ENCODE measurements at regions of chr10 and their contacts with region 1.

Region 1: GRCh38 chr10:89391917-89392756 is at the start of gene IFIT1:
- DNase-seq: peak in 8 of 9 donors; percentile 36 to 84 (median 72)
- ATAC-seq: peak; percentile 96
- H3K4me3 ChIP-seq: peak within 1 kb of the TSS; percentile 82
- H3K4me3 Mint-ChIP-seq: peak within 1 kb of the TSS; percentile 85 to 96 (median 90)
- H3K27ac ChIP-seq: peak within 1 kb of the TSS; percentile 72
- H3K27ac Mint-ChIP-seq: peak within 1 kb of the TSS; percentile 87 to 97 (median 93)
- H3K4me1 ChIP-seq: peaks cover 14 to 19% of the 10 kb centered on the region in 2 donors
- H3K4me1 Mint-ChIP-seq: peaks cover 14 to 53% (median 45%) of the 10 kb centered on the region in 7 donors
- H3K27me3 ChIP-seq: no peaks in the 10 kb centered on the region
- H3K27me3 Mint-ChIP-seq: peaks cover 0 to 6% (median 0%) of the 10 kb centered on the region in 5 donors
- total RNA-seq, gene IFIT1: 1.7 to 15.7 (median 6.5) TPM

Region 2: GRCh38 chr10:89295597-89295996 is 96.5 kb before region 1 on chr10:
- CTCF ChIA-PET with region 1: interaction called, 3 read pairs
- POLR2A ChIA-PET with region 1: interaction called, 27 read pairs
- intact Hi-C with region 1: loop called (anchors 1 kb)
- DNase-seq: no peak
- ATAC-seq: no peak
- H3K4me3 ChIP-seq: no peak overlapping the region
- H3K4me3 Mint-ChIP-seq: peak overlapping the region in 1 of 10 donors; percentile 2
- H3K27ac ChIP-seq: no peak overlapping the region
- H3K27ac Mint-ChIP-seq: peak overlapping the region in 1 of 9 donors; percentile 67
- H3K4me1 ChIP-seq: peaks cover 0 to 8% of the 10 kb centered on the region in 2 donors
- H3K4me1 Mint-ChIP-seq: peaks cover 11 to 40% (median 23%) of the 10 kb centered on the region in 7 donors
- H3K27me3 ChIP-seq: no peaks in the 10 kb centered on the region
- H3K27me3 Mint-ChIP-seq: peaks cover 0 to 25% (median 0%) of the 10 kb centered on the region in 5 donors

Region 3: DNA sequence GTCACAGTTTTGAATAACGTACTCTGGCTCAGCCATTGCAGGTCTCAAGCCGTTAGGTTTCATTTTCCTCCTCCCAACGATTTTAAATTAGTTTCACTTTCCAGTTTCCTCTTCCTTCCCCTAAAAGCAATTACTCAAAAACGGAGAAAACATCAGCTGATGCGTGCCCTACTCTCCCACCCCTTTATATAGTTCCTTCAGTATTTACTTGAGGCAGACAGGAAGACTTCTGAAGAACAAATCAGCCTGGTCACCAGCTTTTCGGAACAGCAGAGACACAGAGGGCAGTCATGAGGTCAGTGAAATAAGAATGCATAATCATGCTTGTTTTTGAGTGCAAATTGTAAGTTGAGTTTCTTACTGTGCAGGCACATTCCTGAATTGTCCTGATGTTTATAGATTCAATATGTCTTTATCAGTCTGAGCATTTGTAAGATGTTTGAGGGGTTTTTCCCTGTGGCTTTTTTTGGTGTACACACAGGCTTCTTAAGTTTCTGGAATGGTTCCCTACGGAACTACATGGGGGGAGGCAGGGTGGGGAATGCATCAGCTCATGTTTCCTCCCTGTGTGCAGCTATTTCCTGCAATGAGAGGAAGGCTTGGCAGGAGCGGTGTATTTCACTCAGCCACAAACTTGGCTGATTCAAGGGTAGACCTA is 64.2 kb before region 1 on chr10 and contains the start of gene IFIT3:
- CTCF ChIA-PET with region 1: no interaction called
- POLR2A ChIA-PET with region 1: interaction called, 11 read pairs
- intact Hi-C with region 1: loop called in 1 of 2 experiments (anchors 1 kb)
- DNase-seq: peak in 7 of 9 donors; percentile 22 to 42 (median 30)
- ATAC-seq: peak; percentile 65
- H3K4me3 ChIP-seq: peak within 1 kb of the TSS; percentile 68
- H3K4me3 Mint-ChIP-seq: peak within 1 kb of the TSS; percentile 80 to 94 (median 90)
- H3K27ac ChIP-seq: peak within 1 kb of the TSS; percentile 62
- H3K27ac Mint-ChIP-seq: peak within 1 kb of the TSS; percentile 70 to 94 (median 87)
- H3K4me1 ChIP-seq: peaks cover 14 to 25% of the 10 kb centered on the region in 2 donors
- H3K4me1 Mint-ChIP-seq: peaks cover 26 to 59% (median 54%) of the 10 kb centered on the region in 7 donors
- H3K27me3 ChIP-seq: no peaks in the 10 kb centered on the region
- H3K27me3 Mint-ChIP-seq: peaks cover 0 to 16% (median 0%) of the 10 kb centered on the region in 5 donors
- total RNA-seq, gene IFIT3: 1.8 to 22.3 (median 3.2) TPM

Region 4: DNA sequence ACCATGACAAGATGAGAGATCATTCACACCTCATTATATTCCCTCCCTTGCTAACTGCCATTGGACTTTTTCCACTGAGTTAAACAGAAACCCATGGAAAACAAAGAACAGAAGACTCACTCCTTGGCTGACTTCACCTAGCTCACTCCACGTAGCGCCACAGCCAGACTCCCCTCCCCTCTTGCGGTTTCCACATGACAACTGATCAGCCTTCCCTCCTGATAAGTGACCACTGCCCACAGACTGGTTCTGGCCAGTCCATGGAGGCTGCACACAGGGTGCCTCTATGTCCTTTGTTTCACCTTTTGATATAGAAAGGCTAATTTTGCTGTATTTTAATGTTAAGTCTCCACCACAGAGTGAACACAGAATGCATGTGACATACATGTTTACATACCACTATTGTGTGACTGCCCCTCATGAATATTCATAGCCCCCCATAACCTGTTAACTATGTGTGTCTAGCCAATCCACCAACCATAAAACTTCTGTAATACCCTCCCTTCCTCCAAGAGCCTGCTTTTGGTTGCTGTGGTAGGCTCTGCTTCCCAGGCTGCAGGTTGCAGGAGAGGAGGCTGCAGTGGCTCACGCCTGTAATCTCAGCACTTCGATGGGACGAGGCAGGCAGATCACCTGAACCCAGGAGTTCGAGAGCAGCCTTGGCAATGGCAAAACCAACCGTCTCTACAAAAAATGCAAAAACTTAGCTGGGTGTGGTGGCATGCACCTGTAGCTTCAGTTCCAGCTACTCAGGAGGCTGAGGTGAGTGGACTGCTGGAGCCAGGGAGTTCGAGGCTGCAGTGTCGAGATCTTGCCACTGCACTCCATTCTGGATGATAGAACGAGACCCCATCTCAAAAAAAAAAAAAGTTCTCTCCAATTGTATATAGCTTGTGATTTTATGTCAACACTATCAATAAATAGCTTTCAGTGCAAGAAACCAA is 12.2 kb after region 1 on chr10:
- CTCF ChIA-PET with region 1: no interaction called
- POLR2A ChIA-PET with region 1: interaction called, 13 read pairs
- intact Hi-C with region 1: no loop called
- DNase-seq: no peak
- ATAC-seq: no peak
- H3K4me3 ChIP-seq: no peak overlapping the region
- H3K4me3 Mint-ChIP-seq: no peak overlapping the region
- H3K27ac ChIP-seq: no peak overlapping the region
- H3K27ac Mint-ChIP-seq: no peak overlapping the region
- H3K4me1 ChIP-seq: no peaks in the 10 kb centered on the region
- H3K4me1 Mint-ChIP-seq: peaks cover 0 to 28% (median 16%) of the 10 kb centered on the region in 7 donors
- H3K27me3 ChIP-seq: no peaks in the 10 kb centered on the region
- H3K27me3 Mint-ChIP-seq: no peaks in the 10 kb centered on the region

Region 5: DNA sequence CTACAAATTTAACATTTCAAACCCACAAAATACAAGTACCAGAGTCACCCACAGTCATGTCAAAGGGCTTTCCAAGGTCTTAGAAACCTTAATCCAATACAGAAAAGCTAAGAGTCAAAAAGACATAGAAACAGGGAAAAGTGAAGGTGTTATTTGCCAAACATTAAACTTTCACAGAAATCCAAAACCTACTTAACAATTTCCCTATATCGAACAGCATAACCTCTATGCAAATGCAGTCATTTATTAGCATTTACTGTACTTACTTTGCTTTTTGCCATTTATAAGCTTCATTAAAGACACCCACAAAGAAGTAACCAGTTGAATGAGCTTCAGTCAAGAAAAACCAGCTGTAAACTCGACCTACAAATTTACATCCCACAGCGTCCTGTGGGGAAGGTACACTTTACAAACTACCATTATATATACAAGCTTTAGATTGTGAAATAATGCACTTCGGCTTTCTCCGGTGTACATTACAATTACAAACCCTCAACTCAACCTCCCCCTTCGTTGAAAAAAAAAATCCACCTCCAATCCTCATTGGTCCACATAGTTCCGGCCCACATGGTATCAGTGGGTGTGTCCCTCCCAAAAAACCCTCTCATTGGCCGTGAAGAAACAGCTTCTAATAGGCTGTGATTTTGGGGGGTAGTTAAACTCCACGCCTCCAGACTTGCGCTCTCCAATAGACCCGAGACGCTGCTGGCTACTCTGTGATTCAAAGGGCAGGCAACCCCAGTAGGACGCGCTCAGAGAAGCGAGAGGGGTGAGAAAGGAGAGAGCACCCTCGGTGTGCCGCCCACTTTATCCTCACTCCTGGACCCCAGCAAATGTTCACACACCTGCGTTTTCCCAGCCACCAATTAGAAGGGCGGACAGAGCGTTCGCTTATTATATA is 251.5 kb after region 1 on chr10:
- CTCF ChIA-PET with region 1: no interaction called
- POLR2A ChIA-PET with region 1: no interaction called
- intact Hi-C with region 1: loop called in 1 of 2 experiments (anchors 1 kb)
- DNase-seq: peak; percentile 22 to 78 (median 68)
- ATAC-seq: peak; percentile 94
- H3K4me3 ChIP-seq: peak overlapping the region; percentile 76
- H3K4me3 Mint-ChIP-seq: no peak overlapping the region
- H3K27ac ChIP-seq: peak overlapping the region; percentile 55
- H3K27ac Mint-ChIP-seq: peak overlapping the region in 2 of 9 donors; percentile 4 to 72
- H3K4me1 ChIP-seq: peaks cover 0 to 6% of the 10 kb centered on the region in 2 donors
- H3K4me1 Mint-ChIP-seq: peaks cover 6 to 13% (median 8%) of the 10 kb centered on the region in 7 donors
- H3K27me3 ChIP-seq: no peaks in the 10 kb centered on the region
- H3K27me3 Mint-ChIP-seq: peaks cover 0 to 23% (median 6%) of the 10 kb centered on the region in 5 donors

Measured in naive thymus-derived CD4-positive, alpha-beta T cell (primary cell).